ENCODE measurements at regions of chr17 and their contacts with region 1.

Region 1: DNA sequence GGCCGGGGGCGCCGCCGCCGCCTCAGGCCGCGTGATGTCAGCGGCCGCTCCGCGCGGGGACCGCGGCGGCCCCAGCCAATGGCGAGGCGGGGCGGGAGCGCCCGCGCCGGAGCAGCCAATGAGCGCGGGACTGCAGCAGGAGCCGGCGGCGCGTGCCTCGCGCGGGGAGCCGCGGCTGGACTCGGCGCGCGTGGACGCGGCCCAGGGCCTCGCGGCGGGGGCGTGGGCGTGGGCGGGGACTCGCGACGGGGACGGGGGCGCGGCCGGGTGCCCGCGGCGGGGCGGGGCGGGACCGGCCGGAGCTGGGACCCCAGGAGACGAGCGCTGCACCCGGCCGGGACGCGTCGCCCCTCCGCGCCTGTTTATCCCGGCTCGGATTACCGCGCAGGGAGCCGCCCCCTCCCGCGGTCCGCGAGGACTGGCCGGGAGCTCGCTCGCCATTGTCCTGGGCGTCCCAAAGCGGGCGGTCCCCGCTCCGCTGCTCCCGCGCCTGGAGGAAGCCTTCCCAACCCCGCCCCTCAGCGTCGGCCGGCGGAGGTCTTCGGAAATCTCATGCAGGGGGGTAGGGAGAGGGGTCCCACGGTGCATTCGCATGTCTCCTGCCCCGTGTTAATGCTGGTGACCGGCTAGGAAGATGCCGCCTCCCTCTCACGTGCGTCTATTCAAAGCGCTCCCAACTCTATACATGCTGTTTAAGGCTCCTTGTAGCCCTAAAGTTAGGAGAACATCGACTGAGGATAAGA is at the start of gene RNF157:
- DNase-seq: peak; percentile 79 to 84
- H3K4me3 ChIP-seq: peak within 1 kb of the TSS; percentile 53
- H3K4me3 Mint-ChIP-seq: peak within 1 kb of the TSS; percentile 92
- H3K27ac Mint-ChIP-seq: peak within 1 kb of the TSS; percentile 80
- H3K4me1 ChIP-seq: peaks cover 31% of the 10 kb centered on the region
- H3K4me1 Mint-ChIP-seq: peaks cover 22% of the 10 kb centered on the region
- H3K27me3 ChIP-seq: no peaks in the 10 kb centered on the region
- H3K27me3 Mint-ChIP-seq: no peaks in the 10 kb centered on the region
- CTCF ChIP-seq: no peak
- total RNA-seq, gene RNF157: 25.9 and 29.3 TPM in 2 replicates

Region 2: GRCh38 chr17:76204277-76204676 is 36.4 kb before region 1 on chr17:
- CTCF ChIA-PET with region 1: interaction called, 6 read pairs
- POLR2A ChIA-PET with region 1: interaction called, 11 read pairs
- intact Hi-C with region 1: no loop called
- DNase-seq: peak in 1 of 2 experiments; percentile 16
- H3K4me3 ChIP-seq: no peak overlapping the region
- H3K4me3 Mint-ChIP-seq: no peak overlapping the region
- H3K27ac Mint-ChIP-seq: peak overlapping the region; percentile 39
- H3K4me1 ChIP-seq: peaks cover 7% of the 10 kb centered on the region; the same call in 1 of the 2 replicates
- H3K4me1 Mint-ChIP-seq: peaks cover 14% of the 10 kb centered on the region
- H3K27me3 ChIP-seq: no peaks in the 10 kb centered on the region
- H3K27me3 Mint-ChIP-seq: no peaks in the 10 kb centered on the region
- CTCF ChIP-seq: no peak

Region 3: GRCh38 chr17:76307299-76307965 is 66.8 kb after region 1 on chr17:
- CTCF ChIA-PET with region 1: no interaction called
- POLR2A ChIA-PET with region 1: no interaction called
- intact Hi-C with region 1: no loop called
- DNase-seq: no peak
- H3K4me3 ChIP-seq: no peak overlapping the region
- H3K4me3 Mint-ChIP-seq: no peak overlapping the region
- H3K27ac Mint-ChIP-seq: no peak overlapping the region
- H3K4me1 ChIP-seq: no peaks in the 10 kb centered on the region
- H3K4me1 Mint-ChIP-seq: peaks cover 6% of the 10 kb centered on the region
- H3K27me3 ChIP-seq: no peaks in the 10 kb centered on the region
- H3K27me3 Mint-ChIP-seq: no peaks in the 10 kb centered on the region
- CTCF ChIP-seq: no peak